H1 (cell line): ENCODE measurements at regions of chr6 and their contacts with region 1.

Region 1: DNA sequence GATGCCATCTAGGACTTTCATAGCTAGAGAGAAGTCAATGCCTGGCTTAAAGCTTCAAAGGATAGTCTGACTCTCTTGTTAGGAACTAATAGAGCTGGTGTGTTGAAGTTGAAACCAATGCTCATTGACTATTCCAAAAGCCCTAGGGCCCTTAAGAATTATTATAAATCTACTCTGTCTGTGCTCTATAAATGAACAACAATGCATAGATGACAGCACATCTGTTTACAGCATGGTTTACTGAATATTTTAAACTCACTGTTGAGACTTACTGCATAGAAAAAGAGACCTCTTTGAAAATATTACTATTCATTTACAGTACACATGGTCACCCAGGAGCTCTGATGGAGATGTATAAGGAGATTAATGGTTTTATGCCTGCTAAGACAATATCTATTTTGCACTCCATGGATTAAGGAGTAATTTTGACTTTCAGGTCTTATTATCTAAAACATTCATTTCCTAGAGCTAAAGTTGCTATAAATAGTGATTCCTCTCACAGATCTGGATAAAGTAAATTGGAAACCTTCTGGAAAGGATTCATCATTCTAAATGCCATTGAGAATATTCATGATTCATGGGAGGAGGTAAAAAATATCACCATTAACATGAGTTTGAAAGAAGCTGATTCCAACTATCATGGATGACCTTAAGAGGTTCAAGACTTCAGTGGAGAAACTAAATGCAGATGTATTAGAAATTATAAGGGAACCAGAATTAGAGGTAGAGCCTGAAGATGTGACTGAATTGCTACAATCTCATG is 763.5 kb upstream of the MAP3K7 start:
- DNase-seq: no peak
- H3K4me3 ChIP-seq: no peak overlapping the region
- H3K27ac ChIP-seq: no peak overlapping the region
- H3K4me1 ChIP-seq: no peaks in the 10 kb centered on the region
- H3K27me3 ChIP-seq: no peaks in the 10 kb centered on the region
- CTCF ChIP-seq: no peak
- EP300 ChIP-seq: no peak
- POLR2A ChIP-seq: no peak
- RAD21 ChIP-seq: no peak

Region 2: GRCh38 chr6:91337967-91338366 is 12.4 kb before region 1 on chr6:
- CTCF ChIA-PET with region 1: interaction called, 10 read pairs
- POLR2A ChIA-PET with region 1: no interaction called
- DNase-seq: no peak
- H3K4me3 ChIP-seq: no peak overlapping the region
- H3K27ac ChIP-seq: no peak overlapping the region
- H3K4me1 ChIP-seq: peaks cover 0 to 8% (median 5%) of the 10 kb centered on the region in 4 experiments; a peak in 3 of 7 replicates
- H3K27me3 ChIP-seq: no peaks in the 10 kb centered on the region
- CTCF ChIP-seq: peak in 2 of 3 experiments; percentile 26 to 33; a peak in 3 of 4 replicates
- EP300 ChIP-seq: no peak
- POLR2A ChIP-seq: no peak
- RAD21 ChIP-seq: peak in 1 of 2 experiments; percentile 10; a peak in 2 of 4 replicates